Right ventricle myocardium inferior (tissue), 1 donor: ENCODE measurements at regions of chr15 and their contacts with region 1.

Region 1: DNA sequence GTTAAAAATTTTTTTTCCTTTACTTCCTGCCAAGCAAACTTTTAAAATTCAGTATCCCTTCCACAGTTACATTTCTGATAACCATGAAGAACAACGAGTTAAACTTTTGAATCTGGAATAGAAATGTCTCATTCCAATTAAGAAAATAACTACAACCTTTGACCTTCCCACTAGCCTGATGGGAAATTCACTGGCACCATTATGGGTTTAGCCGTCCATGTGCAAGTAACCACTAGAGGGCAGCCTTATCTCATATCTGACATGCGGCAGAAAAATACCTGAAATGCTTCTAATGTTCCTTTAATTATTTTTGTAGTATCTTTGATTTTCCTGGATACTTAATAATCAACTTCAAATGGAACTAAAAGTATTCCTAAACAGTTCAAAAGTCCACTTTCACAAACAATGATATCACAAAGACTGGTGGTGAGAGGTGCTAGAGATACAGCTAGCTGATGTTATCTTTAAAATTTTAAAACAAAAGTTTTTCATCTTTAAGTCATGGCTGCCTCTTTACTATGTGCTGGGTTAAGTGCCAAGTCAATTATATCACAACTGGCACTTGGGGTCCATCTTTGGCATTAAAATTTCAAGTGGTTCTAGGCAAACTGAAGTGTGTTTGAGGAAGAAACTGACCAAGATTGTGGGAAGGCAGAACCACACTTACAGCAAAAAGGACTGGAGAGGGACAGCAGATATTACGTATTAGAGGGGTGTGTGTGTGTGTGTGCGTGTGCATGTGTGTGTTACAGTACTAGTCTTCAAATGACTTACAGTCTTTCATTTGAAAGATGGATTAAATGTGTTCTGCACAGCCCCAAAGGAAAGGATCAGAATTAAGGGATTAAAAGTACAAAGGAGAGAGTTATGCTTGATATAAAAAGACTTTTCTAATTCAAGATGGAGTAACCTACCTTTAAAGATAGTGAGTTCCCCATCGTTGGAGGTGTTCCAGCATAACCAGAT is 107.1 kb upstream of the ICE2 start:
- DNase-seq: no peak
- ATAC-seq: peak; percentile 63

Region 2: GRCh38 chr15:60496853-60497252 is 89.2 kb before region 1 on chr15:
- intact Hi-C with region 1: no loop called
- DNase-seq: no peak
- ATAC-seq: no peak

Region 3: DNA sequence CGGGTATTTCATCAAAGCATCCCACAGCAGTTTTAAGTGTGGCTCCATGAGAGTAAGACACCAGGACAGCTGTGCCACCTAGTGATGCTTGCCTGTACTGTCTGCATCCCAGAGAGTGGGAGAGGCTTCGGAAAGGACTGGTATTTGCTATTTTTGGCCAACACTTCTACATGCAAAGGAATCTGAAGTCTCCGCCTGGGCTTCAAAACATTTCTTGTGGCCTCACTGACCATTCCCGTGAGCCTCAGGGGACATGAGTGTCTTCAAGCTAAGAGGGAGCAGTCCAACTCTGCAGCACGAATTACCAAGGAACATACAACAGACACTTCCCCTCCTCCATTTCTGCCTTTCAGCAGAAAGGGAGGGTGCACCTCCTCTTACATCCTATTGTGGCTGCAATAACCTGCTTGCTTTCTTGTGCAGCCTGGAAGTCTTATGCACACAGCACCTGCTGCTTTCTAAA is 465.6 kb after region 1 on chr15:
- intact Hi-C with region 1: loop called (anchors 1 kb)
- DNase-seq: no peak
- ATAC-seq: peak; percentile 81

Region 4: DNA sequence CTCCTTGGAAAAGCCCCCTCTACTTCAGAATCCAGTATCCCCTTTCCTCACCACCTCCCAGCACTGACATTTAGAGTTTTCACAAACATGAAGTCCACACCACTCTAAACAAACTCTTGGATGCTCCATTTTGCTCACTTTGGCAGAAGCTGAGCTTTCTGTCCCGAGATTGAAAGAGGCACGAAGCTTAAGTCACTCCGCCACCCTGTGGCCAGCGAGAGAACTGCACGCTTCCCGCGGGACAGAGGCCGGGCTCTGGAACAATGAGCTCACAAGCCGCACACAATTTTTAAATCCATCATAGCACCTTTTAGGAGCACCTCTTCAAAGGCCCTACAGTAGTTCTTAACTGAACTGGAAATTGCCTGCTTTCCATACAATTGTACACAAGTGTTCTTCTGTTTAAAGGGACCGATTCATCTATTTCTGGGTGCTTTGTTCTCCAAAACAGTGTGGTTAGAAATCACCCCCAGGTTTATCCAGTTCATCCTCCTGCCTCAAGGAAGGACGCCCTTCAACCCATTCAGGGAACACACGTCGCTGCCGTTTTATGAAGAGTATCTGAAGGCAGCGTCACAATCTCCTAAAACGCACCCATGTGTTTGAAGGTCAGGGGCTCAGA is 1248.2 kb after region 1 on chr15:
- intact Hi-C with region 1: loop called (anchors 10 kb)
- DNase-seq: peak; percentile 85
- ATAC-seq: peak; percentile 79